CD4-positive, alpha-beta memory T cell (primary cell): ENCODE measurements at regions of chr13 and their contacts with region 1.

Region 1: GRCh38 chr13:84896128-84896527 is 903.1 kb downstream of the SLITRK6 start:
- DNase-seq: peak in 3 of 5 donors; percentile 4 to 15 (median 13)
- H3K4me3 ChIP-seq: no peak overlapping the region
- H3K4me3 Mint-ChIP-seq: no peak overlapping the region
- H3K27ac ChIP-seq: no peak overlapping the region
- H3K27ac Mint-ChIP-seq: no peak overlapping the region
- H3K4me1 ChIP-seq: no peaks in the 10 kb centered on the region
- H3K4me1 Mint-ChIP-seq: no peaks in the 10 kb centered on the region
- H3K27me3 ChIP-seq: no peaks in the 10 kb centered on the region
- H3K27me3 Mint-ChIP-seq: no peaks in the 10 kb centered on the region

Region 2: GRCh38 chr13:84865783-84866221 is 30.3 kb before region 1 on chr13:
- CTCF ChIA-PET with region 1: no interaction called
- POLR2A ChIA-PET with region 1: no interaction called
- intact Hi-C with region 1: no loop called
- DNase-seq: no peak
- H3K4me3 ChIP-seq: no peak overlapping the region
- H3K4me3 Mint-ChIP-seq: no peak overlapping the region
- H3K27ac ChIP-seq: no peak overlapping the region
- H3K27ac Mint-ChIP-seq: no peak overlapping the region
- H3K4me1 ChIP-seq: no peaks in the 10 kb centered on the region
- H3K4me1 Mint-ChIP-seq: no peaks in the 10 kb centered on the region
- H3K27me3 ChIP-seq: no peaks in the 10 kb centered on the region
- H3K27me3 Mint-ChIP-seq: no peaks in the 10 kb centered on the region

Region 3: DNA sequence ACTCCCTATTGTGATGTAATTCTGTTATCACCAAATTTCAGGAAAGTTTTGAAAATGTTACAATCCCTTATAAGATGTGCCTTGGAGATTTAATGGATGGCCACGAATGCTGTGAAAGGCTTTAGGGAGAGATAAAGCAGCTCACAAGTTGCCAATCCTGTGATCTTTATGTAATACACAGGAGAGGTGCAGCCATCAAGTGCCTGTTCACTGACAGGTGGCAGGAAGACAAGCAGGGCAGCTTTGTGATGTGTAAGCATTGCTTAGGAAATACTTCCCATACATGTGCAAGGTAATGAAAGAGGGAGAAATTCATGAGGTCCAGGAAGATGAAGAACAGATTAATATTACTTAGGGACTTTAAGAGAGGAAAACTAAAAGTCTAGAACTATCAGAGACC is 274.2 kb after region 1 on chr13:
- CTCF ChIA-PET with region 1: no interaction called
- POLR2A ChIA-PET with region 1: no interaction called
- intact Hi-C with region 1: no loop called
- DNase-seq: no peak
- H3K4me3 ChIP-seq: no peak overlapping the region
- H3K4me3 Mint-ChIP-seq: no peak overlapping the region
- H3K27ac ChIP-seq: no peak overlapping the region
- H3K27ac Mint-ChIP-seq: no peak overlapping the region
- H3K4me1 ChIP-seq: no peaks in the 10 kb centered on the region
- H3K4me1 Mint-ChIP-seq: no peaks in the 10 kb centered on the region
- H3K27me3 ChIP-seq: no peaks in the 10 kb centered on the region
- H3K27me3 Mint-ChIP-seq: no peaks in the 10 kb centered on the region

Region 4: GRCh38 chr13:85806553-85807175 is 910.5 kb after region 1 on chr13:
- CTCF ChIA-PET with region 1: interaction called, 3 read pairs
- POLR2A ChIA-PET with region 1: no interaction called
- intact Hi-C with region 1: loop called (anchors 1 kb)
- DNase-seq: peak in 3 of 5 donors; percentile 8 to 17 (median 17)
- H3K4me3 ChIP-seq: no peak overlapping the region
- H3K4me3 Mint-ChIP-seq: no peak overlapping the region
- H3K27ac ChIP-seq: no peak overlapping the region
- H3K27ac Mint-ChIP-seq: no peak overlapping the region
- H3K4me1 ChIP-seq: no peaks in the 10 kb centered on the region
- H3K4me1 Mint-ChIP-seq: no peaks in the 10 kb centered on the region
- H3K27me3 ChIP-seq: no peaks in the 10 kb centered on the region
- H3K27me3 Mint-ChIP-seq: no peaks in the 10 kb centered on the region

Region 5: DNA sequence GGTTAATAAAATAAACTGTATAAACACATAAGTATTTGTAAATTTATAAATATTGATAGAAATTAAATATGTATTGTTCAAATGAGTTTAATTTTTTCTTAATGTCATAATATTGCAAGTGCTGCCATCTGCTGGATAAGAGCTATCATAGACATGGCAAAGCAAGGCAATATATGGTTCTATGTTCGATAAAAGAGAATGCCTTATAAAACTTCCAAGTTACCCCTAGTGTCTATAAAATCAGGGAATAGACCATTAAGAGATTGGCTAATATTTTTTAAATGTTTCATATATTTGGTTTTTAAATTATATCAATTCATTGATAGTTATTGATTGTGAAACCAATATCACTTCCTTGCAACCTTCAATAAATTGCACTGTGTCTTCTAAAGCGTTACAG is 932.0 kb after region 1 on chr13:
- CTCF ChIA-PET with region 1: no interaction called
- POLR2A ChIA-PET with region 1: no interaction called
- intact Hi-C with region 1: loop called (anchors 1 kb)
- DNase-seq: no peak
- H3K4me3 ChIP-seq: no peak overlapping the region
- H3K4me3 Mint-ChIP-seq: no peak overlapping the region
- H3K27ac ChIP-seq: no peak overlapping the region
- H3K27ac Mint-ChIP-seq: no peak overlapping the region
- H3K4me1 ChIP-seq: no peaks in the 10 kb centered on the region
- H3K4me1 Mint-ChIP-seq: no peaks in the 10 kb centered on the region
- H3K27me3 ChIP-seq: no peaks in the 10 kb centered on the region
- H3K27me3 Mint-ChIP-seq: no peaks in the 10 kb centered on the region